Endothelial cell of umbilical vein (primary cell): ENCODE measurements at regions of chr20 and their contacts with region 1.

Region 1: GRCh38 chr20:4135385-4136077 is 120.2 kb upstream of the RNF24 start:
- DNase-seq: peak; percentile 93
- H3K4me3 ChIP-seq: no peak overlapping the region
- H3K27ac ChIP-seq: peak overlapping the region; percentile 71
- H3K4me1 ChIP-seq: peaks cover 32% of the 10 kb centered on the region
- H3K27me3 ChIP-seq: no peaks in the 10 kb centered on the region
- CTCF ChIP-seq: no peak
- POLR2A ChIP-seq: no peak

Region 2: DNA sequence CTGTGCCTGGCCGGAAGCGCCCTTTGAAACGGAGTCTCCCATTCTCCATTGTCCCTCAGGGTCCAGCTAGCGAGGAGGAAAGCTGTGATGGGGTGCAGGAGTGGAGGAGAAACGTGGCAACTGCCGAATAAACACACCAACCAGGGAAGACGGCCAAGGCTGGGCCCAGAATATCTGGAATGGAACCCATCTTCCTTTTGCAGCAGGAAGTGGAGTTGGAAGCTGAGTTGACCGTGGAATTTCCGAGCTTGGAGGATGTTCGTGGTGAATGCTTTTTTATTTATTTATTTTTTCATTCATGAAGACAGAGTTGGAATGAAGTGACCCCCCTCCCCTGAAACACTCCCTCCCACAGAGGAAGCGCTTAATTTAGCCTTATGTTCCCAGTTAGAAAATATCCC is 14.6 kb before region 1 on chr20:
- CTCF ChIA-PET with region 1: interaction called, 4 read pairs
- POLR2A ChIA-PET with region 1: no interaction called
- dilution Hi-C with region 1: no loop called
- intact Hi-C with region 1: loop called (anchors 1 kb)
- DNase-seq: peak; percentile 61
- H3K4me3 ChIP-seq: no peak overlapping the region
- H3K27ac ChIP-seq: no peak overlapping the region
- H3K4me1 ChIP-seq: peaks cover 16% of the 10 kb centered on the region
- H3K27me3 ChIP-seq: no peaks in the 10 kb centered on the region
- CTCF ChIP-seq: no peak
- POLR2A ChIP-seq: no peak

Region 3: DNA sequence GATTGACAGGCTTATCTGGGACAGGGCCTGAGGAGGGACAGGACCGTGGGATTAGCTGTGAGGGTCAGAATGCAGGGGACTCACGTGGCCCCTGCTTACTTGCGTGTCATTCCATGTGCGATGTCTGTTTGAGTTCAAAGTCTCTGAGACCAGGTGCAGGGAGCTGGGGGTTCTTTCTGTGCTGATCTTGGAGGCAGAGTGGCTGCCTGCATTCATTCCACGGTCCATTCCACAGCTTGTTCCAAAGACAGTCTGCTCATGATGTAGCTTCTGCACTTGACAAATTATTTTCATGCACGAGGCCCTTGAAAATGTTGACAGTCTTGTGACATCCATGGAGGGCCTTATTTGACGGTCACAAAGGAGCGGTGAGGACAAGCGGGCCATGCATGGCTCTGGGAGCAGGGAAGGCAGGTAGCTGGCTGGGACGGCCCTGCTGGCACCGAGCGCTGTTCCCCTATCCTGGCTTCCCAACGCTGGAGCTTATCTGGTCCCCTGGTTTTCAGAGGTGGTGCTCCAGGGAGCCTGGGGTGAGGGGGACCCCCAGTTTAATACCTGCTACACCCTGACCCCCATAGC is 36.1 kb after region 1 on chr20:
- CTCF ChIA-PET with region 1: no interaction called
- POLR2A ChIA-PET with region 1: no interaction called
- dilution Hi-C with region 1: no loop called
- intact Hi-C with region 1: no loop called
- DNase-seq: peak; percentile 29
- H3K4me3 ChIP-seq: peak overlapping the region in 2 of 3 experiments; percentile 5 to 48
- H3K27ac ChIP-seq: peak overlapping the region; percentile 88
- H3K4me1 ChIP-seq: peaks cover 21% of the 10 kb centered on the region
- H3K27me3 ChIP-seq: no peaks in the 10 kb centered on the region
- CTCF ChIP-seq: no peak
- POLR2A ChIP-seq: no peak

Region 4: DNA sequence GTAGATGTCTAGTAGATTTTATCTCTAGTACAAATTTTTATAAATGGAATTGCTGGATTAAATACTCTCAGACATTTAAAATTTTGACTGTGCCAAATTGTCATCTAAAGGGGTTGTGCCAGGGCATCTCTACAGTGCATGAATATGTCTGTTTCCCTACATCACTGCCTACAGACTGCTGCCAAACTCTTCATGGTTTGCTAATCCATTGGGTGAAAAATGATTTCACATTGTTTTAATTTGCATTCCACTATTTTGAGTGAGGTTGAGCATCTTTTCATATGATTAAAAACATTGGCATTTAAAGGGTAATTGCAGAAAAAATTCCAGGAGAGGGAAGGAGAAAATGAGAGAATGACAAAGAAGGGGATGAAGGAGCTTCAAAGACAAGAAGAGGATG is 147.5 kb after region 1 on chr20:
- CTCF ChIA-PET with region 1: no interaction called
- POLR2A ChIA-PET with region 1: no interaction called
- dilution Hi-C with region 1: no loop called
- intact Hi-C with region 1: no loop called
- DNase-seq: no peak
- H3K4me3 ChIP-seq: no peak overlapping the region
- H3K27ac ChIP-seq: no peak overlapping the region
- H3K4me1 ChIP-seq: no peaks in the 10 kb centered on the region
- H3K27me3 ChIP-seq: peaks cover 0 to 5% of the 10 kb centered on the region in 2 experiments
- CTCF ChIP-seq: no peak
- POLR2A ChIP-seq: no peak